B cell (primary cell): ENCODE measurements at regions of chr12 and their contacts with region 1.

Region 1: DNA sequence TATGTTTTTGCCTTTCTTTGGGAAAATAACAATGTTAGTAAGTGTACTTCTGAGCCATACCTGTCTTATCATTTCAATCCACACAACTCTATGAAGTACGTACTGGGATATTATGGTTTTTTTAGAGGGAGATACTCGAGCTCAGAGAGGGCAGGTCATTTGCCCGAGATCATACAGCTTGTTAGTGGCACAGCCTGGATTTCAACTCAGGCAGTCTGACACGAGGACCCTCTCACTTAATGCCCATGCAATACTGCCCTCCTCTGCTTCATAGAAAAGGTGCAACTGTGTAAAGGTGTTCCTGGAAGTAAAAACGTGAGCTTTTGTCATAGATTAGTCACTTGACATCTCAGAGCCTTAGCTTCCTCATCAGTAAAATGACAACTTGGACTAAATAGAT is 128.0 kb downstream of the NDUFA12 start:
- DNase-seq: peak; percentile 78
- ATAC-seq: peak; percentile 74
- H3K4me3 ChIP-seq: no peak overlapping the region
- H3K4me3 Mint-ChIP-seq: peak overlapping the region; percentile 27
- H3K27ac ChIP-seq: no peak overlapping the region
- H3K27ac Mint-ChIP-seq: no peak overlapping the region
- H3K4me1 ChIP-seq: peaks cover 32 to 35% of the 10 kb centered on the region in 2 donors
- H3K4me1 Mint-ChIP-seq: peaks cover 37% of the 10 kb centered on the region
- H3K27me3 ChIP-seq: peaks cover 0 to 54% (median 18%) of the 10 kb centered on the region in 4 experiments
- H3K27me3 Mint-ChIP-seq: peaks cover 44% of the 10 kb centered on the region
- CTCF ChIP-seq: peak; percentile 74

Region 2: DNA sequence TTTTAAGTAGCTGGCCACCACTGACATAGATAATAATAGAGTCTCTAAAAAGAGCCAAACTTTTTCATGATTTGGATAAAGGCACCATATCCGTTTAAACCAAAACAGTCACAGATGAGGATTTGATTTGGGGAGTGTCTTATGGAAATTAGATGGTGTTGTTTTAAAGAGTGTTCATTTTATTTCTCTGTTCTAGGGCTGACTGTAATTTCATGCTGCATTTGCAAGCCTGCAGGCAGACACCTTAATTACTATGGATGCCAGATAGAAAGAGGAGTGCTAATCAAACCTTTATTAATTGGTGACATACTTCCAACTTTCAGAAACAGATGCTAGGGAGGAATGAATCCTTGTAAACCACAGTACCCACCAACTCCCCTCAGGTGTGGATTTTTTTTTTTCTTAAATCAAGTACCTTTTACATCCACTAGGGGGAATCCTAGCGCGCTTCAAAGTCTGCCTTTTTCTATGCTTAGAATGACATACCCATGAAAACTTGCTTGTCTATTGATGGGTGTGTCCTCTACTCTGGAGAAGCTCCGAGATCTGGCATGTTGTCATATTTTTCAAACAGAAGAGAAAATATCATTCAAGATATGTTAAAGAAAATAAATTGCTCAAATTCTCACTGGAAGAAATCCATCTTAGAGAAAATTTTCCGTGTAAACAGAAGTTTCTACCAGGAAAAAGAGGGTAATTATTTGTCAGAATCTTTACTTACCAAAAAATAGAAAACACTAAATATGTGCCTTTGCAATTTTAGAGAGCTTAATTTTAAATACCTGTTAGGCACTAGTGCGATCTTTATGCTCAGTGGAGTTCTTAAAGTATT is 741.3 kb before region 1 on chr12:
- CTCF ChIA-PET with region 1: interaction called, 13 read pairs
- POLR2A ChIA-PET with region 1: no interaction called
- intact Hi-C with region 1: no loop called
- DNase-seq: peak; percentile 74
- ATAC-seq: peak; percentile 91
- H3K4me3 ChIP-seq: no peak overlapping the region
- H3K4me3 Mint-ChIP-seq: no peak overlapping the region
- H3K27ac ChIP-seq: no peak overlapping the region
- H3K27ac Mint-ChIP-seq: no peak overlapping the region
- H3K4me1 ChIP-seq: peaks cover 3 to 10% of the 10 kb centered on the region in 2 donors
- H3K4me1 Mint-ChIP-seq: peaks cover 10% of the 10 kb centered on the region
- H3K27me3 ChIP-seq: no peaks in the 10 kb centered on the region
- H3K27me3 Mint-ChIP-seq: peaks cover 3% of the 10 kb centered on the region
- CTCF ChIP-seq: peak; percentile 89

Region 3: DNA sequence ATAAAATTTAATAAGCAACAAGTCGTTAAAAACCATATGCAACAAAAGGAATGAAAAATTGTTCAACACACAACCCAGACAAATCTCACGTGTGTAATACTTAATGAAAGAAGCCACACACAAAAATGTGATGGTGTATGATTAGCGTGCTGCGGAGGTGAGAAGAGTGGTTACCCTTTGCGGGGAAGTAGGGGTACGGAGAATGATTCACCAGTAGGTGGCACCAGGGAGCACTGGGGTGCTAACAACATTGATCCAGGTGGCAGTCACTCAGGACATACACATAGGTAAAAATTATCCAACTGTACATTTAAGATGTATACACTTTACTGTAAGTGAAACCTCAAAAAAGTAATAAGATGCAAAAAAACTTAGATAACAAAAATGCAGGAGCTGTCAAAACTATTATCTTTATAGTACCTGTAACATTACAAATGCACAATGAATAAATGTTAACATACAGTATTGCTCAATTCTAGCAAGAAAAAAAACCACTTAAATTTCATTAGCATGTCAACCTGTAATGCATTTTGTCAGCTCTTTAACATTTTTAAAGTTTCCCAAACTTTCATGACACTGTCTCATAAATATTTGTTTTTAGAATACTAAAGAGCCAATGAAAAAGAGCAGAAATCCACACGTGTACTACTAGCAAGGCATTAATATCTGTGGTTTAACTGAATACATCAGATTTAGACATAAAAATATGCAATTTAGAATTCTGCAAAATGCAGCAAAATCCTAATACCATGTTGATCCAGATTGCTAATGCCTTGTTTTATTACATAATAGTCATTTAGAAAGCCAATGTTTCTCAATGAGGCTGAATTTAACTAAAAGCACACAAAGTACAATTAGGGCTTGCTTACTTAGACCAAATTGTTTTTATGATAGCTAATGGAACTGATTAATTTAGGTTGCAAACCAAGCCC is 271.8 kb before region 1 on chr12:
- CTCF ChIA-PET with region 1: interaction called, 26 read pairs
- POLR2A ChIA-PET with region 1: no interaction called
- intact Hi-C with region 1: loop called (anchors 1 kb)
- DNase-seq: peak; percentile 68
- ATAC-seq: peak; percentile 70
- H3K4me3 ChIP-seq: no peak overlapping the region
- H3K4me3 Mint-ChIP-seq: no peak overlapping the region
- H3K27ac ChIP-seq: no peak overlapping the region
- H3K27ac Mint-ChIP-seq: no peak overlapping the region
- H3K4me1 ChIP-seq: no peaks in the 10 kb centered on the region
- H3K4me1 Mint-ChIP-seq: no peaks in the 10 kb centered on the region
- H3K27me3 ChIP-seq: no peaks in the 10 kb centered on the region
- H3K27me3 Mint-ChIP-seq: no peaks in the 10 kb centered on the region
- CTCF ChIP-seq: peak; percentile 77

Region 4: GRCh38 chr12:94721173-94721572 is 154.4 kb before region 1 on chr12:
- CTCF ChIA-PET with region 1: interaction called, 26 read pairs
- POLR2A ChIA-PET with region 1: no interaction called
- intact Hi-C with region 1: no loop called
- DNase-seq: peak; percentile 72
- ATAC-seq: peak; percentile 93
- H3K4me3 ChIP-seq: peak overlapping the region in 1 of 5 experiments; percentile 14
- H3K4me3 Mint-ChIP-seq: peak overlapping the region; percentile 58
- H3K27ac ChIP-seq: no peak overlapping the region
- H3K27ac Mint-ChIP-seq: peak overlapping the region; percentile 23
- H3K4me1 ChIP-seq: peaks cover 32 to 44% of the 10 kb centered on the region in 2 donors
- H3K4me1 Mint-ChIP-seq: peaks cover 51% of the 10 kb centered on the region
- H3K27me3 ChIP-seq: peaks cover 0 to 3% (median 0%) of the 10 kb centered on the region in 4 experiments
- H3K27me3 Mint-ChIP-seq: no peaks in the 10 kb centered on the region
- CTCF ChIP-seq: no peak

Region 5: DNA sequence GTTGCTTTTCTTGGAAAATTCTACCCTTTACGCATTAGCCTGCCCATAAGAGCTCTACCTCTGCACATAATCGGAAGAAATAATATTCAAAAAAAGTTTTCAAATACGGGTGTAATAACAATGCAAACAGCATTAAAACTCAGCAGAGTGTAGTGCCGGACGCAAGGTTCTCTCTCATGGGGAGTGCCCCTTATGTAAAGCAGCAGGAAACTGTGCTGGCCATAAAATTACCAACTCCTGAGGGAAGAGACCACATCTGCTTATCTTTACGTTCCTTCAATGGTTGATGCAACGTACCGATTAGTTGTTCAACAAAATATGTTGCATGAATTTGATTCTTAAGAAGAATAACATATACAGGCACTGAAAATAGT is 106.5 kb before region 1 on chr12:
- CTCF ChIA-PET with region 1: interaction called, 18 read pairs
- POLR2A ChIA-PET with region 1: no interaction called
- intact Hi-C with region 1: loop called (anchors 2 kb)
- DNase-seq: peak; percentile 74
- ATAC-seq: peak; percentile 89
- H3K4me3 ChIP-seq: peak overlapping the region; percentile 36 to 60 (median 54)
- H3K4me3 Mint-ChIP-seq: peak overlapping the region; percentile 90
- H3K27ac ChIP-seq: peak overlapping the region; percentile 69 to 70
- H3K27ac Mint-ChIP-seq: peak overlapping the region; percentile 82
- H3K4me1 ChIP-seq: peaks cover 50 to 54% of the 10 kb centered on the region in 2 donors
- H3K4me1 Mint-ChIP-seq: peaks cover 63% of the 10 kb centered on the region
- H3K27me3 ChIP-seq: no peaks in the 10 kb centered on the region
- H3K27me3 Mint-ChIP-seq: no peaks in the 10 kb centered on the region
- CTCF ChIP-seq: no peak

Region 6: GRCh38 chr12:94831081-94831751 is 44.3 kb before region 1 on chr12:
- CTCF ChIA-PET with region 1: interaction called, 9 read pairs
- POLR2A ChIA-PET with region 1: no interaction called
- intact Hi-C with region 1: loop called (anchors 5 kb)
- DNase-seq: peak; percentile 86
- ATAC-seq: peak; percentile 94
- H3K4me3 ChIP-seq: peak overlapping the region in 2 of 5 experiments; percentile 5 to 23
- H3K4me3 Mint-ChIP-seq: peak overlapping the region; percentile 95
- H3K27ac ChIP-seq: peak overlapping the region; percentile 92 to 94
- H3K27ac Mint-ChIP-seq: peak overlapping the region; percentile 100
- H3K4me1 ChIP-seq: peaks cover 39% of the 10 kb centered on the region in 2 donors
- H3K4me1 Mint-ChIP-seq: peaks cover 47% of the 10 kb centered on the region
- H3K27me3 ChIP-seq: no peaks in the 10 kb centered on the region
- H3K27me3 Mint-ChIP-seq: no peaks in the 10 kb centered on the region
- CTCF ChIP-seq: no peak

Region 7: GRCh38 chr12:95217377-95218149 is 342.0 kb after region 1 on chr12 and contains the starts of genes FGD6 and VEZT:
- CTCF ChIA-PET with region 1: no interaction called
- POLR2A ChIA-PET with region 1: no interaction called
- intact Hi-C with region 1: loop called (anchors 10 kb)
- DNase-seq: peak; percentile 99
- ATAC-seq: peak; percentile 90
- H3K4me3 ChIP-seq: peak within 1 kb of the TSS; percentile 62 to 97 (median 94)
- H3K4me3 Mint-ChIP-seq: peak within 1 kb of the TSS; percentile 95
- H3K27ac ChIP-seq: peak within 1 kb of the TSS; percentile 88 to 92
- H3K27ac Mint-ChIP-seq: peak within 1 kb of the TSS; percentile 96
- H3K4me1 ChIP-seq: peaks cover 11% of the 10 kb centered on the region in 2 donors
- H3K4me1 Mint-ChIP-seq: peaks cover 38% of the 10 kb centered on the region
- H3K27me3 ChIP-seq: no peaks in the 10 kb centered on the region
- H3K27me3 Mint-ChIP-seq: no peaks in the 10 kb centered on the region
- CTCF ChIP-seq: peak; percentile 69
- total RNA-seq, gene FGD6: 7.3 and 8.4 TPM in 2 replicates
- total RNA-seq, gene VEZT: 61.8 and 69.3 TPM in 2 replicates